ENCODE measurements at regions of chr1 and their contacts with region 1.

Region 1: GRCh38 chr1:153649863-153650235 is 8.7 kb upstream of the SNAPIN start:
- DNase-seq: peak in 1 of 9 experiments; percentile 38
- ATAC-seq: peak; percentile 15
- H3K4me3 ChIP-seq: peak overlapping the region in 1 of 2 experiments; percentile 18
- H3K4me3 Mint-ChIP-seq: peak overlapping the region; percentile 77
- H3K27ac ChIP-seq: peak overlapping the region; percentile 24 to 54
- H3K27ac Mint-ChIP-seq: peak overlapping the region; percentile 94
- H3K4me1 ChIP-seq: peaks cover 49% of the 10 kb centered on the region
- H3K4me1 Mint-ChIP-seq: peaks cover 46% of the 10 kb centered on the region
- H3K27me3 ChIP-seq: no peaks in the 10 kb centered on the region
- H3K27me3 Mint-ChIP-seq: no peaks in the 10 kb centered on the region
- CTCF ChIP-seq: no peak

Region 2: GRCh38 chr1:153639280-153639679 is 10.6 kb before region 1 on chr1:
- CTCF ChIA-PET with region 1: interaction called, 7 read pairs
- POLR2A ChIA-PET with region 1: interaction called, 33 read pairs
- intact Hi-C with region 1: no loop called
- DNase-seq: no peak
- ATAC-seq: no peak
- H3K4me3 ChIP-seq: no peak overlapping the region
- H3K4me3 Mint-ChIP-seq: no peak overlapping the region
- H3K27ac ChIP-seq: no peak overlapping the region
- H3K27ac Mint-ChIP-seq: no peak overlapping the region
- H3K4me1 ChIP-seq: peaks cover 37% of the 10 kb centered on the region
- H3K4me1 Mint-ChIP-seq: peaks cover 70% of the 10 kb centered on the region
- H3K27me3 ChIP-seq: no peaks in the 10 kb centered on the region
- H3K27me3 Mint-ChIP-seq: no peaks in the 10 kb centered on the region
- CTCF ChIP-seq: no peak

Region 3: DNA sequence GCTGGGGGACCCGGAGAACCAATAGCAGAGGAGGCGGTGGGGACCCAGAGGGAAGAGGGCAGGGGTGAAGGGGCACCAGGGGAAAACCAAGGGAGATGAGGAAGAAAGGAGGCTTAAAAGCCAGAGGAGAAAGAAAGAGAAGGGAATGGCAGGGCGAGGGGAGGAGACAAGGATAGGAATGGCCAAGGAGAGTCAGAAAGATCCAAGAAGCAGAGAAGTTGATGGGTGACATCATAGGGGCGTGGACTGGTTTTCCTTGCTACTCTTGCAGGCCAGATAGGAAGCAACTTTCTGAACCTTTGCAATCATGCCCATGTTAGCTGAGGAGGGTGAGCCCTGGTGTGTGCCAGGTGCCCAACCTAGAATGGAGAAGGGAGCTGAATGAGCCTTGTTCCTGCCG is 34.0 kb after region 1 on chr1:
- CTCF ChIA-PET with region 1: no interaction called
- POLR2A ChIA-PET with region 1: no interaction called
- intact Hi-C with region 1: no loop called
- DNase-seq: no peak
- ATAC-seq: no peak
- H3K4me3 ChIP-seq: no peak overlapping the region
- H3K4me3 Mint-ChIP-seq: no peak overlapping the region
- H3K27ac ChIP-seq: no peak overlapping the region
- H3K27ac Mint-ChIP-seq: no peak overlapping the region
- H3K4me1 ChIP-seq: peaks cover 11% of the 10 kb centered on the region
- H3K4me1 Mint-ChIP-seq: peaks cover 8% of the 10 kb centered on the region
- H3K27me3 ChIP-seq: peaks cover 11 to 19% of the 10 kb centered on the region in 2 experiments
- H3K27me3 Mint-ChIP-seq: peaks cover 28% of the 10 kb centered on the region
- CTCF ChIP-seq: no peak

Region 4: GRCh38 chr1:153705485-153705884 is 55.6 kb after region 1 on chr1:
- CTCF ChIA-PET with region 1: no interaction called
- POLR2A ChIA-PET with region 1: no interaction called
- intact Hi-C with region 1: no loop called
- DNase-seq: no peak
- ATAC-seq: no peak
- H3K4me3 ChIP-seq: no peak overlapping the region
- H3K4me3 Mint-ChIP-seq: no peak overlapping the region
- H3K27ac ChIP-seq: no peak overlapping the region
- H3K27ac Mint-ChIP-seq: no peak overlapping the region
- H3K4me1 ChIP-seq: no peaks in the 10 kb centered on the region
- H3K4me1 Mint-ChIP-seq: no peaks in the 10 kb centered on the region
- H3K27me3 ChIP-seq: peaks cover 0 to 2% of the 10 kb centered on the region in 2 experiments
- H3K27me3 Mint-ChIP-seq: no peaks in the 10 kb centered on the region
- CTCF ChIP-seq: no peak

Measured in CD8-positive, alpha-beta T cell (primary cell).